ENCODE measurements at regions of chr6 and their contacts with region 1.

Region 1: DNA sequence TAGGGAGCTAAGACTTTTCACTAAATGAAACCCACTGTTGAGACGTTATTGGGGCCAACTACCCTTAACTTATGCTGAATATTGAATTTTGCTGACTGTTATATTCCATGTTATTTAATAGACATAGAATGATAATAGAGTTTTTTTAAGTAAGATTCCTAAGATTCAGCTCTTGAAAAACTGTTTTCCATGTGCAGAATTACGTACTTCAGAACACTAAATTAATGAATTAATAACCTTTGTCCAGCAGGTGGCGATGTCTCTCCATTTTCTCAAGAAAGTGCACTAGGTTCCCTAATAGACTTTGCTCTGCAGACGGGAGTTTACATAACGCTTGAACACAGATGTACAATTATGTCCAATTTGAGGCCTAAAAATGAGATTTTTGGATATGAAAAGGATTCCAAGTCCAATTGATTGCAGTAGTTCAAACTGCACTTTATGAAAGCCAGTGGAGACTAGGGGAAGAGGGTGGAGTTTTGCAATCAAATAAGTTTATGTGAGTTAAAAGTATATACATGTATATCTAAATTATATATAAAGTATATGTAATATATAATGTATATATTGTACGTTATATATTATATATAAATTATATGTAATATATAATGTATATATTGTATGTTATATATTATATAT is 282.1 kb downstream of the UST start:
- DNase-seq: peak; percentile 95
- ATAC-seq: no peak; the same call in 1 of the 2 replicates
- H3K4me3 ChIP-seq: no peak overlapping the region
- H3K27ac ChIP-seq: no peak overlapping the region
- H3K4me1 ChIP-seq: peaks cover 20% of the 10 kb centered on the region
- H3K27me3 ChIP-seq: no peaks in the 10 kb centered on the region
- CTCF ChIP-seq: peak; percentile 78
- POLR2A ChIP-seq: no peak
- RAD21 ChIP-seq: peak; percentile 90

Region 2: GRCh38 chr6:148578245-148578732 is 450.6 kb before region 1 on chr6:
- CTCF ChIA-PET with region 1: interaction called, 9 read pairs
- POLR2A ChIA-PET with region 1: no interaction called
- dilution Hi-C with region 1: no loop called
- in situ Hi-C with region 1: loop called (anchors 10 kb)
- intact Hi-C with region 1: loop called (anchors 1 kb)
- DNase-seq: peak; percentile 80
- ATAC-seq: peak; percentile 100
- H3K4me3 ChIP-seq: no peak overlapping the region
- H3K27ac ChIP-seq: no peak overlapping the region
- H3K4me1 ChIP-seq: peaks cover 1% of the 10 kb centered on the region; the same call in 1 of the 2 replicates
- H3K27me3 ChIP-seq: no peaks in the 10 kb centered on the region
- CTCF ChIP-seq: peak; percentile 99
- POLR2A ChIP-seq: no peak
- RAD21 ChIP-seq: peak; percentile 95

Region 3: DNA sequence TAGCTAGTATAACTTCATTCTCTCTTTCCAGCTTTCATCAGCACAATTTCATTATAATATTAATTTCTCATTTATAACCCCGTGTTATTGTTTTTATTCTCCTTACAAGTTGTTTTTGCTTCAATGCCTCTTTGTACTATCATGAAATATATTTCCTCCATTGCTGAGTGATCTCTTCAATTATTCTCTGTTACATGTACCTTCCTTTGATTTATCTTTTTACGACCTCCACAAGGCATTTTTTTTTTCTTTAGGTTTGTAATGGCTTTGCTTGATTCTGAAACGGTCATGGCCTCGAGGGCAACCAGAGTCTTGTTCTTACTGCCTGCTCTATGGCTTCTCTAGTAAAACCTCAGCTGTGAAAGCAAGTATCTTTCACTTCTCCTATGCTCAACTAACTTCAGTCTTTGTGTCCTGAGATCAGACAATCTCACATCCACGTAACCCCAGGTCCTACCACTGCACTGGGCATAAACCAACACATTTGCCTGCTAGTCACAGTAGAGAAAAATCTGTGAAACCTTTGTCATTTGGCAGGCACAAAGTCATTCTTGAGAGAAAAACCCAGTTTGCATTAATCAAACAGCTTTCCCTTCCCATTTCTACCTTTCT is 162.1 kb before region 1 on chr6:
- CTCF ChIA-PET with region 1: no interaction called
- POLR2A ChIA-PET with region 1: no interaction called
- dilution Hi-C with region 1: no loop called
- in situ Hi-C with region 1: no loop called
- intact Hi-C with region 1: no loop called
- DNase-seq: no peak
- ATAC-seq: no peak
- H3K4me3 ChIP-seq: no peak overlapping the region
- H3K27ac ChIP-seq: no peak overlapping the region
- H3K4me1 ChIP-seq: peaks cover 14% of the 10 kb centered on the region
- H3K27me3 ChIP-seq: no peaks in the 10 kb centered on the region
- CTCF ChIP-seq: no peak
- POLR2A ChIP-seq: no peak
- RAD21 ChIP-seq: no peak

Region 4: GRCh38 chr6:148947621-148948444 is 81.1 kb before region 1 on chr6:
- CTCF ChIA-PET with region 1: no interaction called
- POLR2A ChIA-PET with region 1: no interaction called
- dilution Hi-C with region 1: no loop called
- in situ Hi-C with region 1: no loop called
- intact Hi-C with region 1: loop called (anchors 2 kb)
- DNase-seq: peak; percentile 82
- ATAC-seq: peak; percentile 91
- H3K4me3 ChIP-seq: no peak overlapping the region
- H3K27ac ChIP-seq: no peak overlapping the region
- H3K4me1 ChIP-seq: peaks cover 4% of the 10 kb centered on the region
- H3K27me3 ChIP-seq: no peaks in the 10 kb centered on the region
- CTCF ChIP-seq: peak; percentile 79
- POLR2A ChIP-seq: no peak
- RAD21 ChIP-seq: peak; percentile 88

Region 5: GRCh38 chr6:149082286-149082707 is 53.4 kb after region 1 on chr6:
- CTCF ChIA-PET with region 1: interaction called, 4 read pairs
- POLR2A ChIA-PET with region 1: no interaction called
- dilution Hi-C with region 1: no loop called
- in situ Hi-C with region 1: no loop called
- intact Hi-C with region 1: loop called (anchors 1 kb)
- DNase-seq: peak; percentile 75
- ATAC-seq: peak; percentile 50
- H3K4me3 ChIP-seq: no peak overlapping the region
- H3K27ac ChIP-seq: no peak overlapping the region
- H3K4me1 ChIP-seq: peaks cover 13% of the 10 kb centered on the region
- H3K27me3 ChIP-seq: peaks cover 5% of the 10 kb centered on the region
- CTCF ChIP-seq: peak; percentile 79
- POLR2A ChIP-seq: no peak
- RAD21 ChIP-seq: peak; percentile 82

Region 6: GRCh38 chr6:149316798-149317655 is 288.1 kb after region 1 on chr6:
- CTCF ChIA-PET with region 1: no interaction called
- POLR2A ChIA-PET with region 1: no interaction called
- dilution Hi-C with region 1: no loop called
- in situ Hi-C with region 1: no loop called
- intact Hi-C with region 1: loop called (anchors 2 kb)
- DNase-seq: peak; percentile 89
- ATAC-seq: peak; percentile 90
- H3K4me3 ChIP-seq: peak overlapping the region; percentile 99
- H3K27ac ChIP-seq: peak overlapping the region; percentile 97
- H3K4me1 ChIP-seq: peaks cover 4% of the 10 kb centered on the region
- H3K27me3 ChIP-seq: no peaks in the 10 kb centered on the region; the same call in 1 of the 2 replicates
- CTCF ChIP-seq: no peak
- POLR2A ChIP-seq: peak; percentile 63; the same call in 1 of the 2 replicates
- RAD21 ChIP-seq: 0 out of 2 replicates have a peak, but pooled peaks have one; percentile 8

Region 7: GRCh38 chr6:149513915-149514314 is 485.0 kb after region 1 on chr6:
- CTCF ChIA-PET with region 1: interaction called, 4 read pairs
- POLR2A ChIA-PET with region 1: no interaction called
- dilution Hi-C with region 1: no loop called
- in situ Hi-C with region 1: loop called (anchors 5 kb)
- intact Hi-C with region 1: loop called (anchors 1 kb)
- DNase-seq: no peak
- ATAC-seq: no peak
- H3K4me3 ChIP-seq: no peak overlapping the region
- H3K27ac ChIP-seq: no peak overlapping the region
- H3K4me1 ChIP-seq: no peaks in the 10 kb centered on the region
- H3K27me3 ChIP-seq: no peaks in the 10 kb centered on the region
- CTCF ChIP-seq: no peak
- POLR2A ChIP-seq: no peak
- RAD21 ChIP-seq: no peak